ENCODE measurements at regions of chr22 and their contacts with region 1.

Region 1: DNA sequence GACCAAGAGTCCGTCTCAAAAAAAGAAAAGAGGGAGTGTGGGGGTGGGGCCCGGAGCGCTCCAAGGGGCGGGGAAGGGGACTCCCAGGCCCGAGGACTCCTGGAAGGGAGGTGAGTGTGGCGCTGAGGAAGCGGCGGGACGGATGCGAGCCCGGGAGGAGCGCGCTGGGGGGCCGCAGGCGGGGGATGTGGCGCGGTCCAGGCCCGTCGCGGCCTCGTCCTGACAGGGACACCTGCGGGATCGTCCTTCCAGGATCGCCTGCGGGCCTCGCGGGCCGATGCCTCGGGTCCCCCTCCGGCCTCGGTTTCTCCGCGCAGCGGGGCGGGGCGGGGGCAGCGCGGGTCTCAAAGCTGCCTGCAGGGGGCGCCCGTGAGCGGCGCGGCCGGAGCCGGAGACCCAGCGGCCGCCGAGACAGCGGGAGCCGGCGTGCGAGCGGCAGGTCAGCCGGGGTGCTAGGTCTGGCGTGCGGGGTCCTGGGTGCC is 3.8 kb upstream of the ADORA2A start:
- DNase-seq: peak in 1 of 2 experiments; percentile 92
- H3K4me3 ChIP-seq: peak overlapping the region in 2 of 4 experiments; percentile 39 to 73; a peak in 4 of 8 replicates
- H3K27ac ChIP-seq: no peak overlapping the region
- H3K4me1 ChIP-seq: peaks cover 0 to 28% (median 20%) of the 10 kb centered on the region in 4 experiments; a peak in 6 of 7 replicates
- H3K27me3 ChIP-seq: peaks cover 3 to 23% (median 15%) of the 10 kb centered on the region in 4 experiments
- CTCF ChIP-seq: peak; percentile 60 to 91 (median 67)
- EP300 ChIP-seq: no peak
- POLR2A ChIP-seq: no peak
- RAD21 ChIP-seq: peak; percentile 45 to 69

Region 2: GRCh38 chr22:24315367-24315966 is 108.1 kb before region 1 on chr22:
- CTCF ChIA-PET with region 1: no interaction called
- POLR2A ChIA-PET with region 1: no interaction called
- DNase-seq: no peak
- H3K4me3 ChIP-seq: no peak overlapping the region
- H3K27ac ChIP-seq: no peak overlapping the region
- H3K4me1 ChIP-seq: no peaks in the 10 kb centered on the region
- H3K27me3 ChIP-seq: no peaks in the 10 kb centered on the region
- CTCF ChIP-seq: no peak
- EP300 ChIP-seq: no peak
- POLR2A ChIP-seq: no peak
- RAD21 ChIP-seq: no peak

Region 3: DNA sequence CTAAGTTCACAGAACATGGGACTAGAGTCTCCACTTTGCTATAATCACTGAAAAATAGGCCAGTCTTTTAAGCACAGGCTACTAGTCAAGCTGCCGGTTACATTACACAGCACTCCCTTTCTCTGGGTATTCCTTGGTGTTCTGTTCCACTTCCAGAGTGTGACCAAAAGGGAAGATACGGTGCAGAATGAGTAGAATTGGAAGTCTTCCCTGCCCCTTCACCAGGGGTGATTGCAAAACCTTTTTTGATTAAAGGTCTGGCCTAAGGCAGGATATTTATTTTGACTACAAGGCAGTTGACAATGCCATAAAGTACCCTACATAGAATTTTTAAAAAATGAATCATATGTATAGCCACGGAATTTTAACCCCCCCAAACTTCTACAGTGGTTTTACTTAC is 55.7 kb before region 1 on chr22:
- CTCF ChIA-PET with region 1: no interaction called
- POLR2A ChIA-PET with region 1: no interaction called
- DNase-seq: no peak
- H3K4me3 ChIP-seq: no peak overlapping the region
- H3K27ac ChIP-seq: no peak overlapping the region
- H3K4me1 ChIP-seq: no peaks in the 10 kb centered on the region
- H3K27me3 ChIP-seq: no peaks in the 10 kb centered on the region
- CTCF ChIP-seq: no peak
- EP300 ChIP-seq: no peak
- POLR2A ChIP-seq: no peak
- RAD21 ChIP-seq: no peak

Region 4: DNA sequence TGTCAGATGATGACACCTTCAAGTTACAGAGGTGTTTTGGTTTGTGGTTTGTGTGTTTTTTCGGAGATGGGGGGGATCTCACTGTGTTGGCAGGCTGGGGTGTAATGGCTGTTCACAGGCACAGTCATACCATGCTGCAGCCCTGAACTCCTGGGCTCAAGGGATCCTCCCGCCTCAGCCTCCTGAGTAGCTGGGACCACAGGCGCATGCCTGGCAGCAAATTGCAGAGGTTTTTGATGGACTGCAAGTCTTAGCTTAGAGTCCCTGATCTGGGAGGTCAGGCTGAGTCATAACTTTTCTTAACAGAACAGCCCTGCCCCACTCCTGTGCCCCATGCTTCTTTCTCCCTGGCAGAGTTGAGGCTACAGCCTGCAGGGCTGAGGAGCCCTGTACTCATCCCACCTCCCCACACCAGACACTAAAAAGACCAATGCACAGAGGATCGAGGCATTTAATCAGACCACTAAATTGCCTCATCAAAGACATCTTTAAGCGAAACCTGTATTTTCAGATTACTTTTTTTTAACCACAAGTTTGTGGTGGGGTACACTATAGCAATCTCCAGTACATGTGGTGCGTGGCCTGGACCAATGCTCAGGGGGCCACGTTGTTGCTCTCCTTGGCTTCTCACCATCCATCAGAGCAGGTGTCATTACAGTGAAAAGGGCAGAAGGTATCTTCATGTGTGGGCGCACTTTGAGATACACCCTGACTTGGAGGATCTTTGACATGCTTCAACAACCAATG is 13.3 kb before region 1 on chr22:
- CTCF ChIA-PET with region 1: interaction called, 83 read pairs
- POLR2A ChIA-PET with region 1: no interaction called
- DNase-seq: no peak
- H3K4me3 ChIP-seq: no peak overlapping the region
- H3K27ac ChIP-seq: no peak overlapping the region
- H3K4me1 ChIP-seq: peaks cover 0 to 12% (median 0%) of the 10 kb centered on the region in 4 experiments; a peak in 2 of 7 replicates
- H3K27me3 ChIP-seq: no peaks in the 10 kb centered on the region
- CTCF ChIP-seq: no peak
- EP300 ChIP-seq: no peak
- POLR2A ChIP-seq: no peak
- RAD21 ChIP-seq: no peak

Region 5: GRCh38 chr22:24460418-24461089 is 37.0 kb after region 1 on chr22:
- CTCF ChIA-PET with region 1: interaction called, 16 read pairs
- POLR2A ChIA-PET with region 1: no interaction called
- DNase-seq: no peak
- H3K4me3 ChIP-seq: no peak overlapping the region
- H3K27ac ChIP-seq: no peak overlapping the region
- H3K4me1 ChIP-seq: peaks cover 0 to 4% (median 3%) of the 10 kb centered on the region in 4 experiments; a peak in 5 of 7 replicates
- H3K27me3 ChIP-seq: no peaks in the 10 kb centered on the region
- CTCF ChIP-seq: no peak
- EP300 ChIP-seq: no peak
- POLR2A ChIP-seq: no peak
- RAD21 ChIP-seq: no peak

Region 6: DNA sequence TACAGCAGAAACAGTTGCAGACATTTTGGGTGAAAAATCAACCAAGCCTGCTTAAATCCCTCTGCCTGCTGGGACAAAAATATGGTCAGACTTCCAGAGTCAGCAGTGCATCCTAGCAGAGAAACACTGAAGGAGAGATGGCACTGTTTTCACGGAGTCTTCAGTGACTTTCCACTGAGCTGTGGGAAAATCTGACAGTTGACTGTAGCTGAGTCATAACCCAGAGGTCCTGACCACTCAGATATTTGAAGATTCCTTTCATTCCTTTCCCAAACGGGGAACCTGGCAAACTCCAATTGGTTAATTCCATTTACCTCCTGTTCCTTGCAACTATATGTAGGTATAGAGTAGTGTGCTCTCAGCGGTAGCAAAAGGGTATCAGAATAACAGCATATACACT is 50.7 kb after region 1 on chr22:
- CTCF ChIA-PET with region 1: interaction called, 18 read pairs
- POLR2A ChIA-PET with region 1: no interaction called
- DNase-seq: no peak
- H3K4me3 ChIP-seq: no peak overlapping the region
- H3K27ac ChIP-seq: no peak overlapping the region
- H3K4me1 ChIP-seq: no peaks in the 10 kb centered on the region
- H3K27me3 ChIP-seq: no peaks in the 10 kb centered on the region
- CTCF ChIP-seq: no peak
- EP300 ChIP-seq: no peak
- POLR2A ChIP-seq: no peak
- RAD21 ChIP-seq: no peak

Region 7: GRCh38 chr22:24503137-24503842 is 79.7 kb after region 1 on chr22:
- CTCF ChIA-PET with region 1: interaction called, 201 read pairs
- POLR2A ChIA-PET with region 1: interaction called, 7 read pairs
- DNase-seq: peak in 1 of 2 experiments; percentile 83
- H3K4me3 ChIP-seq: no peak overlapping the region
- H3K27ac ChIP-seq: no peak overlapping the region
- H3K4me1 ChIP-seq: peaks cover 3 to 15% (median 9%) of the 10 kb centered on the region in 4 experiments; a peak in 5 of 7 replicates
- H3K27me3 ChIP-seq: peaks cover 0 to 2% (median 0%) of the 10 kb centered on the region in 4 experiments; a peak in 3 of 7 replicates
- CTCF ChIP-seq: peak; percentile 80 to 87 (median 82)
- EP300 ChIP-seq: no peak
- POLR2A ChIP-seq: no peak
- RAD21 ChIP-seq: peak; percentile 74 to 83

Region 8: DNA sequence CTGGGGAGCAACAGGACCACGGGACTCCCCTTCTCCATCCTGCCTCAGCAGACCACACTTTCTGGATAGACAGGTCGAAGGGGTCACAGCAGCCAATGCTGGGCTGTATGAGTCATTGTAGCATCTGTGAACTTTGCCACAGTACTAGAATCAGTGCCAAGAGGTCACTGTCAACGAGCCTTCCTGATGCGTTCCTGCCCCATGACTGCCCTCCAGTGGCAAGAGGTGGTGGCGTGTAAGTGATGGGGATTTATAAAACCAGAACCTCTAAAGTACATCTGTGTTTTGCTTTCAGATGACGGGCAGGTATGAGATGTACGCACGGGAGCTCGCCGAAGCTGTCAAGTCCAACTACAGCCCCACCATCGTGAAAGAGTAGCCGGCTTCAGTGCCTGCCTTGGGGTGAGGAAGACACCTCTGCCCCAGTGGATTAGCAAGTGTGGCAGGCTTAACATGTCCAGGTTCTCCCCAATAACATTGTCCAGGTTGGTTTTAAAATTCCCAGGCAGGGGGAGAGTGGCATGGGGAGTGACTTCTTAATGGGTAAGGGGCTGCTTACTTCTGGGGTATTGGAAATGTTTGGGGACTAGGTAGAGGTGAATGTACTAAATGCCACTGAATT is 102.0 kb after region 1 on chr22:
- CTCF ChIA-PET with region 1: interaction called, 74 read pairs
- POLR2A ChIA-PET with region 1: interaction called, 3 read pairs
- DNase-seq: peak; percentile 51 to 91
- H3K4me3 ChIP-seq: no peak overlapping the region
- H3K27ac ChIP-seq: no peak overlapping the region
- H3K4me1 ChIP-seq: peaks cover 0 to 3% (median 0%) of the 10 kb centered on the region in 4 experiments; a peak in 3 of 7 replicates
- H3K27me3 ChIP-seq: no peaks in the 10 kb centered on the region
- CTCF ChIP-seq: peak; percentile 90 to 98 (median 97)
- EP300 ChIP-seq: no peak
- POLR2A ChIP-seq: no peak
- RAD21 ChIP-seq: peak; percentile 94 to 95

Measured in H1 (cell line).